ENCODE measurements at regions of chr1 and their contacts with region 1.

Region 1: GRCh38 chr1:159089184-159089791 is 12.7 kb upstream of the AIM2 start:
- DNase-seq: peak in 4 of 5 donors; percentile 39 to 57 (median 40)
- H3K4me3 ChIP-seq: no peak overlapping the region
- H3K4me3 Mint-ChIP-seq: no peak overlapping the region
- H3K27ac ChIP-seq: no peak overlapping the region
- H3K27ac Mint-ChIP-seq: no peak overlapping the region
- H3K4me1 ChIP-seq: peaks cover 7% of the 10 kb centered on the region
- H3K4me1 Mint-ChIP-seq: peaks cover 6 to 32% (median 22%) of the 10 kb centered on the region in 4 donors
- H3K27me3 ChIP-seq: no peaks in the 10 kb centered on the region
- H3K27me3 Mint-ChIP-seq: no peaks in the 10 kb centered on the region

Region 2: GRCh38 chr1:157963713-157964112 is 1125.6 kb before region 1 on chr1:
- CTCF ChIA-PET with region 1: no interaction called
- POLR2A ChIA-PET with region 1: no interaction called
- intact Hi-C with region 1: loop called (anchors 10 kb)
- DNase-seq: peak in 4 of 5 donors; percentile 9 to 36 (median 24)
- H3K4me3 ChIP-seq: no peak overlapping the region
- H3K4me3 Mint-ChIP-seq: no peak overlapping the region
- H3K27ac ChIP-seq: no peak overlapping the region
- H3K27ac Mint-ChIP-seq: no peak overlapping the region
- H3K4me1 ChIP-seq: no peaks in the 10 kb centered on the region
- H3K4me1 Mint-ChIP-seq: peaks cover 0 to 1% (median 0%) of the 10 kb centered on the region in 4 donors
- H3K27me3 ChIP-seq: no peaks in the 10 kb centered on the region
- H3K27me3 Mint-ChIP-seq: peaks cover 7 to 35% of the 10 kb centered on the region in 2 donors

Region 3: DNA sequence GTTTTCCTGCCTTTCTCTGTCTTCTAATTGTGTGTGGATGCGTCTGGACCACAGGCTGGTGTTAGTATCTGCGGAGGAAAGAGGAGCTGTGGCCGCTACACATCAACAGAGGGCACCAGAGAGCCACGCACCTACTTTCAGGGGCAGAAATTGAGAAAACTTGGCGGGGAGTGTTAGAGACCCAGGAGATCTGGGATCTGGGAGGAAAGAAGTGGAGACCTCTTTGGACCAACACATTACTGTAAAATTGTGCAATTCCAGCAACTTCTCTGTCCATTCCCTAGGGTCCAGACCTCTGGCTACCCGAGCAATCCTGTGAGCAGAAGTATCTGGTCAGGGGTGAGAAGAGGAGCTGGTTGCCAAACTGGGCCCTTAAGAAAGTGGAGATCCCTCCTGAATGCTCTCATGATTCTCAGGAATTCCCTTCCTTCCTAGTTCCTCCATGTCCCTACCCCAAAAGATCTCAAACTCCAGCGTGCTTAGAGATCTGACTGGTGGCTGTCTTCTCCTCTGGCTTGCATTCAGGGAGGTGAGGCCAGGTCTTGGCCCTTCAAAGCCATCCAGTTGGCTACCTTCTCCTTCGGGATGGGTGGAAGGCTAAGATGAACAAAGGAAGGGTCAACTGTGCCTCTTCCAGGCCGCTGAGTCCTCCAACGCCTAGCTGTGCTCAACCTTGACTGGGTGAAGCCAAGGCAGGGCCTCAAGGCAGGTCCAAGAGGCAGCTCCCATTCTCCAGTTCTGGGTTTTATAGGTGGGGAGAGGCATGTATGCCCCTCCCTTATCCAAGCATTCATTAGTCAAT is 1097.1 kb before region 1 on chr1:
- CTCF ChIA-PET with region 1: no interaction called
- POLR2A ChIA-PET with region 1: no interaction called
- intact Hi-C with region 1: loop called (anchors 2 kb)
- DNase-seq: peak in 3 of 5 donors; percentile 6 to 24 (median 13)
- H3K4me3 ChIP-seq: no peak overlapping the region
- H3K4me3 Mint-ChIP-seq: peak overlapping the region in 3 of 8 donors; percentile 1 to 80 (median 70)
- H3K27ac ChIP-seq: no peak overlapping the region
- H3K27ac Mint-ChIP-seq: no peak overlapping the region
- H3K4me1 ChIP-seq: no peaks in the 10 kb centered on the region
- H3K4me1 Mint-ChIP-seq: peaks cover 0 to 18% (median 6%) of the 10 kb centered on the region in 4 donors
- H3K27me3 ChIP-seq: peaks cover 10% of the 10 kb centered on the region
- H3K27me3 Mint-ChIP-seq: peaks cover 20 to 25% of the 10 kb centered on the region in 2 donors

Region 4: GRCh38 chr1:158257888-158258287 is 831.4 kb before region 1 on chr1:
- CTCF ChIA-PET with region 1: no interaction called
- POLR2A ChIA-PET with region 1: no interaction called
- intact Hi-C with region 1: no loop called
- DNase-seq: no peak
- H3K4me3 ChIP-seq: no peak overlapping the region
- H3K4me3 Mint-ChIP-seq: no peak overlapping the region
- H3K27ac ChIP-seq: no peak overlapping the region
- H3K27ac Mint-ChIP-seq: no peak overlapping the region
- H3K4me1 ChIP-seq: no peaks in the 10 kb centered on the region
- H3K4me1 Mint-ChIP-seq: no peaks in the 10 kb centered on the region
- H3K27me3 ChIP-seq: peaks cover 6% of the 10 kb centered on the region
- H3K27me3 Mint-ChIP-seq: peaks cover 3 to 22% of the 10 kb centered on the region in 2 donors

Region 5: DNA sequence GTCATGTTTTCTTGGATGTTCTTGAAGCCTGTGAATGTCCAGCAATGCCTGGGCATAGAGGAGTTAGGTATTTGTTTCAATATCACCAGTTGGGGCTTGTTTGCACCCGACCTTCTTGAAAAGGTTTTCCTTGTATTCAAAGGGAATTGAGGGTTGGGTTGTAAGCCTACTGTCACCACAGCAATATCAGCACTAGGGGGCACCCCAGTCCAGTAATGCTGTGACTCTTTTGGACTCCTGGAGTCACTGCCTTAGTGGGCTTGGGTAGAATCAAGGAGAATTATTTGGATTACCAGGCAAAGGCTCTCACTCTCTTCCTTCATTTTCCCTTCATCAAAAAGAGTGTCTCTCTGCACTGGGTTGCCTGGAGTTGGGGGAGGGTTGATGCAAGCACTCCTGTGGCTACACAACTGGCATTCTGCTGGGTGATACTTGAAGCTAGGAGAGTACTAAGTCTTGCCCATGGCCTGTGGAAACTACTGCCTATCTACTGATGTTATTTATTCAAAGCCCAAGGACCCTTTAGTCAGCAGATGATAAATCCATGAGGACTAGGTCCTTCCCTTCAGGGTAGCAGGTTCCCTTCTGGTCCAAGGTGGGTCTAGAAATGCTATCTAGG is 582.8 kb before region 1 on chr1:
- CTCF ChIA-PET with region 1: interaction called, 5 read pairs
- POLR2A ChIA-PET with region 1: no interaction called
- intact Hi-C with region 1: loop called (anchors 1 kb)
- DNase-seq: peak in 4 of 5 donors; percentile 18 to 35 (median 24)
- H3K4me3 ChIP-seq: no peak overlapping the region
- H3K4me3 Mint-ChIP-seq: no peak overlapping the region
- H3K27ac ChIP-seq: no peak overlapping the region
- H3K27ac Mint-ChIP-seq: no peak overlapping the region
- H3K4me1 ChIP-seq: no peaks in the 10 kb centered on the region
- H3K4me1 Mint-ChIP-seq: no peaks in the 10 kb centered on the region
- H3K27me3 ChIP-seq: no peaks in the 10 kb centered on the region
- H3K27me3 Mint-ChIP-seq: peaks cover 11 to 32% of the 10 kb centered on the region in 2 donors

Region 6: DNA sequence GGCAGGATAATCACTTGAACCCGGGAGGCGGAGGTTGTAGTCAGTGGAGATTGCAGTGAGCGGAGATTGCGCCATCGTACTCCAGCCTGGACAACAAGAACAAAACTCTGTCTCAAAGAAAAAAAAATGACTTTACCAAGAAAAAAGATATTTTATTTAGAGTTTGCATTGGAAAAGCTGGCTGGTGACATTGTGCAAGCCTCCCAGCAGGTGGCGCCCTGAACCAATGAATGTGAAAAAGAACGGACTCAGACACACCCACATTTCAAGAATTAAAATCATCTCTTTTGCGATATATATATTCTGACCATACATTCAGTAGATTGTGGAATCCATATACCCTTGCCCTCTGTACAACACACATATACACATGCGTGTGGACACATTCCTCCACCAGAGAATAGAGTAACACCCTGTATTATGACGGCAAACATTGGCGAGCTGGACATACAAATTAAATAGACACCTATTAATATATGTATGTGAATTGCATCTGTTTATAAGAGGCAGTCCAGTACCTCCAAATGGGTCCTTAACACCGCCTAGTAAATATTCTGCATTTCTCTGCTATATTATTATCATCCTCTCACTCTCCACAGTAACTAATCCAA is 43.1 kb after region 1 on chr1:
- CTCF ChIA-PET with region 1: no interaction called
- POLR2A ChIA-PET with region 1: no interaction called
- intact Hi-C with region 1: no loop called
- DNase-seq: peak; percentile 41 to 59 (median 49)
- H3K4me3 ChIP-seq: no peak overlapping the region
- H3K4me3 Mint-ChIP-seq: no peak overlapping the region
- H3K27ac ChIP-seq: no peak overlapping the region
- H3K27ac Mint-ChIP-seq: no peak overlapping the region
- H3K4me1 ChIP-seq: no peaks in the 10 kb centered on the region
- H3K4me1 Mint-ChIP-seq: no peaks in the 10 kb centered on the region
- H3K27me3 ChIP-seq: no peaks in the 10 kb centered on the region
- H3K27me3 Mint-ChIP-seq: peaks cover 4 to 12% of the 10 kb centered on the region in 2 donors